ENCODE measurements at regions of chr6 and their contacts with region 1.

Region 1: DNA sequence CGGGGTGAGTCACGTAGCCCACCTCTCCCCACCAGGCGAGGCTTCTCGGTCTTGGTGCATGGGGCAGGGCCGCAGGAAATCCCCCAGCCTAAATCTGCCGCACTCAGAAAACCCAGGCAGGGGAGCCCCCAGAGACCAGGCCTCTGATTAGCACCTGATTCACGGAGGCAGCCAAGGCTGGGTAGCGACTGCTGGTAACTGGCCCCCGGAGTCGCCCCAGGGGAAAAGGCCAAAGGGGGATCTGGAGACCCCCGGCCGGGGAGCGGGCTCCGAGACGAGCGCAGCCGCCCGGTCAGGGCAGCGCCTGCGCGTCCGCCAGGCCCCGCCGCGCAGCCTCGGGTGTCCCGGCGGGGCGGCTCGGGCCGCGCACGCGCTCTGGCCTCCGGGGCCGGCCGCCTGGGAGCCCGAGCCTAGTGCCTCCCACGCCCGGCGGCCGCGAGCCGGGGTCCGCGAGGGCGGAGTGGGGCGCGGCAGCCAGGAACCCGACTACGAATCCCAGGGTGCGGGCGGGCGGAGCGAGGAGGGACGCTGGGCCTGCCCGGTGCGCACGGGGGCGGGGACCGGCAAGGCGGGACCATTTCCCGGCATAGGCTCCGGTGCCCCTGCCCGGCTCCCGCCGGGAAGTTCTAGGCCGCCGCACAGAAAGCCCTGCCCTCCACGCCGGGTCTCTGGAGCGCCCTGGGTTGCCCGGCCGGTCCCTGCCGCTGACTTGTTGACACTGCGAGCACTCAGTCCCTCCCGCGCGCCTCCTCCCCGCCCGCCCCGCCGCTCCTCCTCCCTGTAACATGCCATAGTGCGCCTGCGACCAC is at the start of gene DUSP22:
- DNase-seq: peak; percentile 91
- H3K4me3 Mint-ChIP-seq: peak within 1 kb of the TSS; percentile 91
- H3K27ac Mint-ChIP-seq: peak within 1 kb of the TSS; percentile 96
- H3K4me1 Mint-ChIP-seq: peaks cover 38% of the 10 kb centered on the region
- H3K27me3 Mint-ChIP-seq: no peaks in the 10 kb centered on the region
- CTCF ChIP-seq: no peak
- total RNA-seq, gene DUSP22: 29.4 and 40.7 TPM in 2 replicates

Region 2: GRCh38 chr6:165906-166305 is 126.0 kb before region 1 on chr6:
- CTCF ChIA-PET with region 1: no interaction called
- POLR2A ChIA-PET with region 1: no interaction called
- intact Hi-C with region 1: no loop called
- DNase-seq: no peak
- H3K4me3 Mint-ChIP-seq: no peak overlapping the region
- H3K27ac Mint-ChIP-seq: no peak overlapping the region
- H3K4me1 Mint-ChIP-seq: no peaks in the 10 kb centered on the region
- H3K27me3 Mint-ChIP-seq: peaks cover 52% of the 10 kb centered on the region
- CTCF ChIP-seq: no peak

Region 3: DNA sequence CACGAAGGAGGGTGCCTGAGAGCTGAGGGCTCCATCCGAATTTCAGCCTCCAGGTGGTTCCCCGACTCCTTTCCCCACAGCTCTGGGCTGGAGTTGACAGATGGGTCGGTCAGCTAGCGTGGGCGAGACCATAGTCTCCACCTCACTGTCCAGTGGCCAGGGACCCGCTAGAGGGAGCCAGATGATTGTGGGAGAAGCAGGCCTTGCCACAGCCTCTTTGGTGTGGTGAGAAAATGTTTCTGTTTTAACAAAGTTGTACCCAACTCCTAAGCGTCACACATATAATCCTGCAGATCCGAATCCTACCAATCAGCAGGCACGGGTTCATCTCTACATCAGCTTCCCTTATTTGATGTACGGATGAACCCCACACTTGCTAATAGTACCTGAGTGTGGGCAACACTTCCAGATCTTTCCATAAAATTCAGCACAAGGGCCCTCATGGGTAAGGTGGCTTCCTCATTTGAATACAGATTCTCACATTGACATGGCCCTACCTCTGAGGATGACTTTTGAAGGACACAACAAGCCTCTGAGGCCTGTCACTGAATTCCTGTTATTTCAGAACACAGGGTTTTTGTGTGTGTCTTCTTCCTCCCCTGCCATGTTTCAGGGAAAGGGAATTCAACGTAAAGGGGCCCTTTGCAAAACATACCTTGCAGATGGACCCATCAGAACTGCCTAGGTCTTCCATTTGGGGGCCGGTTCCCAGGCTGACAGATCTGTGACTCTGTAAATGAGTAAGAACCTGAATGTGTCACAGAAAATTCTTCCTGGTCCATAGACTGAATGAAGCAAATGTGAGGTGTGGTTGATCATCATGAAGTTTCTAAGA is 102.9 kb before region 1 on chr6:
- CTCF ChIA-PET with region 1: interaction called, 4 read pairs
- POLR2A ChIA-PET with region 1: no interaction called
- intact Hi-C with region 1: loop called (anchors 1 kb)
- DNase-seq: peak; percentile 97
- H3K4me3 Mint-ChIP-seq: no peak overlapping the region
- H3K27ac Mint-ChIP-seq: peak overlapping the region; percentile 69
- H3K4me1 Mint-ChIP-seq: peaks cover 18% of the 10 kb centered on the region
- H3K27me3 Mint-ChIP-seq: no peaks in the 10 kb centered on the region
- CTCF ChIP-seq: peak; percentile 92

Region 4: DNA sequence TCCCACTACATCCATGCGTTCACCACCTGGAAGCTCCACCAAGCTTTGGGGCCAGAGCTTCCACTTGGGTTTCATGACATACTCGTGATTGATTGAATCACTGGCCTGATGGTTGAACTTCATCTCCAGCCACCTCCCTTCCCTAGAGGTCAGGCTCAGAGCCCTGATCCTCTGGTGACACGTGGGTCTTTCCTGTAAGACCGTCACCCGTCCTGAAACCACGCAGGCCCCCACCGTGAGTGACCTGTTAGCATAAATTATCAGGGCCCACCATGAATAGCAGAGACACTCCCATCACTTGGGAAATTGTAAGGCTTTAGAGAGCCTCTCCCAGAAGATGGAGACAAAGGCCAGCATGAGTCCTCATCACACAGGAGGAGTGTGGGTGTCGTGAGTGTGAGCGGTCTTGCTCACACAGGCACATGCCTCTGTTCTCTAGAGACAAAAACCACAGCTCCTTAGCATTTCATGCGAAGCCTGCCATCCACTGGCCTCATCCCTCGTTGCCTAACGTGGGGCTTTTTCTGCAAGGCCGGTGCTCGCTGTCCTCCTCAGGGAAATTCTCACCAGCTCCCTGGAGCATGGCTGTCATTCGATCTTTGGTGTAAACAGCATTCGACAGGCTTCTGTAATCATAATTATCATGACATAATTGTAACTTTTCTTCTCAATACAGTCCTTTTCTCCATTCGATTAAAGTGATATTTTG is 64.7 kb before region 1 on chr6:
- CTCF ChIA-PET with region 1: no interaction called
- POLR2A ChIA-PET with region 1: interaction called, 27 read pairs
- intact Hi-C with region 1: loop called (anchors 2 kb)
- DNase-seq: no peak
- H3K4me3 Mint-ChIP-seq: no peak overlapping the region
- H3K27ac Mint-ChIP-seq: no peak overlapping the region
- H3K4me1 Mint-ChIP-seq: peaks cover 22% of the 10 kb centered on the region
- H3K27me3 Mint-ChIP-seq: no peaks in the 10 kb centered on the region
- CTCF ChIP-seq: no peak

Region 5: GRCh38 chr6:328136-328670 is 36.3 kb after region 1 on chr6:
- CTCF ChIA-PET with region 1: interaction called, 3 read pairs
- POLR2A ChIA-PET with region 1: interaction called, 10 read pairs
- intact Hi-C with region 1: no loop called
- DNase-seq: peak; percentile 93
- H3K4me3 Mint-ChIP-seq: no peak overlapping the region
- H3K27ac Mint-ChIP-seq: no peak overlapping the region
- H3K4me1 Mint-ChIP-seq: no peaks in the 10 kb centered on the region
- H3K27me3 Mint-ChIP-seq: no peaks in the 10 kb centered on the region
- CTCF ChIP-seq: no peak

Region 6: GRCh38 chr6:422433-423054 is 130.6 kb after region 1 on chr6:
- CTCF ChIA-PET with region 1: no interaction called
- POLR2A ChIA-PET with region 1: interaction called, 3 read pairs
- intact Hi-C with region 1: loop called (anchors 2 kb)
- DNase-seq: peak; percentile 90
- H3K4me3 Mint-ChIP-seq: no peak overlapping the region
- H3K27ac Mint-ChIP-seq: peak overlapping the region; percentile 64
- H3K4me1 Mint-ChIP-seq: no peaks in the 10 kb centered on the region
- H3K27me3 Mint-ChIP-seq: no peaks in the 10 kb centered on the region
- CTCF ChIP-seq: no peak

Region 7: DNA sequence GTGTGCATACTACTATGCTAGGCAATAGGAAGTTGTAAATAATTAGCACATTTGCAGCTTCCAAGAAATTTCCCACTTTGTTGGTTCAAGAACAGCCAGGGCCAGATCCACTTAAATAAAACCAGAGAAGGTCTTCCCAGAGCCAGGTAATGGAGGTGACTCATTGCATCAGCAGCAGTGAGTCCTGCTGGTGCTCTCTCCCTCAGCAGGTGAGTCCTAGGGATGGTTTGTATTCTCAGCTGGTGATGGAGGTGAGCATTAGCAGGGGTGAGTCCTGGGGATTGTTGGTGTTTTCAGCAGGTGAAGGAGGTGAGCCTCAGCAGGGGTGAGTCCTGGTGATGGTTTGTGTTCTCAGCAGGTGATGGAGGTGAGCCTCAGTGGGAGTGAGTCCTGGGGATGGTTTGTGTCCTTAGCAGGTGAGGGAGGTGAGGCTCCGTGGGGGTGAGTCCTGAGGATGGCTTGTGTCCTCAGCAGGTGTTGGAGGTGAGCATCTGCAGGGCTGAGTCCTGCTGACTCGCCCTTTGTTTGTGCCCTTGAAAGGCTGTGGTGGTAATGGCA is 633.8 kb after region 1 on chr6:
- CTCF ChIA-PET with region 1: no interaction called
- POLR2A ChIA-PET with region 1: no interaction called
- intact Hi-C with region 1: no loop called
- DNase-seq: peak; percentile 18
- H3K4me3 Mint-ChIP-seq: no peak overlapping the region
- H3K27ac Mint-ChIP-seq: no peak overlapping the region
- H3K4me1 Mint-ChIP-seq: no peaks in the 10 kb centered on the region
- H3K27me3 Mint-ChIP-seq: no peaks in the 10 kb centered on the region
- CTCF ChIP-seq: no peak